ENCODE measurements at regions of chr17 and their contacts with region 1.

Region 1: DNA sequence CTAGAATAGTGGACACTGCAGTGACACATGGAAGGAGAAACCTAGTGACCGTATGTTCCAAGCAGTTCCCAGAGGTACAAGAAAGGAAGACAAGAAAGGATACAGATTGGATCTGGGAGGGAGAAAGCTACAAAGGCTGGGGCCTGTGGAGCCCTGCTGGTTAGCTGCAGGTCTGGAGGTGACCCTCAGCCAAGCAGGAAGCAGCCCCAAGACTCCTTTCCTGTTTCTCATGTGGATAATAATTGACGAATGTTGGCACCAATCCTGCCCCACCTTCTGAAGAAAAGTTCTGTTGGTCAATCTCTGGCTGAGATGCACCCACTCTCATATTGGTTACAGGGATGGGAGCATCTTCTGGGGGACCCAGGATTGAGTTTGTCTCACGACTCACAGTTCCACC is 99.8 kb downstream of the SHISA6 start:
- DNase-seq: no peak
- H3K4me3 ChIP-seq: no peak overlapping the region
- H3K27ac ChIP-seq: no peak overlapping the region
- H3K4me1 ChIP-seq: no peaks in the 10 kb centered on the region
- H3K27me3 ChIP-seq: no peaks in the 10 kb centered on the region
- CTCF ChIP-seq: no peak
- EP300 ChIP-seq: no peak
- POLR2A ChIP-seq: no peak

Region 2: GRCh38 chr17:11221721-11222120 is 119.1 kb before region 1 on chr17:
- intact Hi-C with region 1: no loop called
- DNase-seq: no peak
- H3K4me3 ChIP-seq: no peak overlapping the region
- H3K27ac ChIP-seq: no peak overlapping the region
- H3K4me1 ChIP-seq: no peaks in the 10 kb centered on the region
- H3K27me3 ChIP-seq: peaks cover 0 to 14% (median 0%) of the 10 kb centered on the region in 4 donors
- CTCF ChIP-seq: no peak
- EP300 ChIP-seq: no peak
- POLR2A ChIP-seq: no peak

Region 3: GRCh38 chr17:11279847-11280246 is 61.0 kb before region 1 on chr17:
- intact Hi-C with region 1: loop called (anchors 10 kb)
- DNase-seq: no peak
- H3K4me3 ChIP-seq: no peak overlapping the region
- H3K27ac ChIP-seq: no peak overlapping the region
- H3K4me1 ChIP-seq: no peaks in the 10 kb centered on the region
- H3K27me3 ChIP-seq: no peaks in the 10 kb centered on the region
- CTCF ChIP-seq: no peak
- EP300 ChIP-seq: no peak
- POLR2A ChIP-seq: no peak

Region 4: DNA sequence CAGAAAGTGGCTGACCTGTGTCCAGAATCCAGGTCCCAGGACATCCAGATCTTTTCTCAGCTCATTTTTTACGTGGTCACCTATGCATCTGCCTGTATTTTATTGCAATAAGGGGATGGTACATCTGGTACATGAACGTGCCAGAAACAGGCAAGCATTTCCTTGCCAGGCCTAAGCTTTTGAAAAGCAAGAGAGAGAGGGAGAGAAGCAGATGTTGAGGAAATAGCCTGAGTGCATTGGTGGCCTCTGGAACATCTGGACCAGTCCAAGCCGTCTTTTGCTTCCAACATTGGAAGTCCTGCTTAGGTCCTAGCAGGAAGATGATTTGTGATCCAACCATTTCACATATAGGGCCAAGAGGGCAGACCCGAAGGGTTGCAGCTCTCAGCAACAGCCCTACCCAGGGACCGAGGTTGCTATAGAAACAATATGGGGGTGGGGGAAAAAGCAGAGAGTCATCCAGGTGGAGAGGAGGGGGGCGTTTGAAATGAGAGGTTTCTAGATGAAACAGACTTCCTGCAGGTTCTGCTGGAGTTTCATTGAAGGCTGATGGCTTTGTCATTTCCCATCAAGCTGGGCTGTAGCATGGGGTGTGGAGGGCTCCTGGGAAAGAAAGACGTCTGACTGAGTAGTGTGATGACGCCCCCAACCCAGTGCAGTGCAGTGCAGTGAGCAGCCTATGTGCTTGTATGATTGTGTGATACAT is 38.2 kb before region 1 on chr17:
- intact Hi-C with region 1: no loop called
- DNase-seq: peak; percentile 74
- H3K4me3 ChIP-seq: no peak overlapping the region
- H3K27ac ChIP-seq: no peak overlapping the region
- H3K4me1 ChIP-seq: peaks cover 0 to 10% (median 3%) of the 10 kb centered on the region in 4 donors
- H3K27me3 ChIP-seq: no peaks in the 10 kb centered on the region
- CTCF ChIP-seq: no peak
- EP300 ChIP-seq: no peak
- POLR2A ChIP-seq: no peak

Region 5: DNA sequence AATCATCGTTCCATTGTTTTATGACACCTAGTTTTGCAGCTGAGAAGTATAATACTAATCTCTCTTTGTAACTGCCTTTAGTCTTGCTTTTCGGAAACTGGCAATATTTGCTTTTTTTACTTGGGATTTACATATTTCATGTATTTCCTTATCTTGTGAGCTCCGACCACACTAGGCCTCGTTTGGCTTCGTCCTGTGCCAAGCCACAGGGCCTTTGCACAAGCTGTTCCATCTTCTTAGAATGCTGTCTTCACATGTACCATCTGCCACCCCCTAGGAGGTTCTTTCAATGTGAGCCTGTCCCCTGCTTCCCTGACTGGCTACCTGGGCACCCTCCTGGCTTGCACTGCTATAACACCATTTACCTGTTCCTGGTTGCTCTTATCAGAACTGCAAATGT is 22.6 kb before region 1 on chr17:
- intact Hi-C with region 1: no loop called
- DNase-seq: peak; percentile 68
- H3K4me3 ChIP-seq: no peak overlapping the region
- H3K27ac ChIP-seq: no peak overlapping the region
- H3K4me1 ChIP-seq: no peaks in the 10 kb centered on the region
- H3K27me3 ChIP-seq: no peaks in the 10 kb centered on the region
- CTCF ChIP-seq: no peak
- EP300 ChIP-seq: no peak
- POLR2A ChIP-seq: no peak

Region 6: DNA sequence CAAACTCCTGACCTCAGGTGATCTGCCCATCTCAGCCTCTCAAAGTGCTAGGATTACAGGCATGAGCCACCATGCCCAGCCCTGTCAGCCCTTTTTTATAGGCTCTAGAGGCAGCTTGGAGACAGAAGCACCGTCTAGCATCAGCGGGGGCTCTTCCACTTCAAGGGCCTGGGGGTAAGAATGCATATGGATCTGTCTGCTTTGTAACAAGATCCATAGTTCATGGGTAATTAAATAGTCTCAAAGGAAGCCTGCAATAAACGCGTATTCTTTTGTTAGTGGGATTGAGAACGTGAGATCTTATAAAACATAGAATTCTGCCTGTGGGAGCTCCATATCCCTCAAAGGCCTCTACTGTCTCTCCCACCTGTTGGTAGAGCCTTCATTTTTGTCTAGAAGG is 42.4 kb after region 1 on chr17:
- intact Hi-C with region 1: no loop called
- DNase-seq: no peak
- H3K4me3 ChIP-seq: no peak overlapping the region
- H3K27ac ChIP-seq: no peak overlapping the region
- H3K4me1 ChIP-seq: no peaks in the 10 kb centered on the region
- H3K27me3 ChIP-seq: no peaks in the 10 kb centered on the region
- CTCF ChIP-seq: no peak
- EP300 ChIP-seq: no peak
- POLR2A ChIP-seq: no peak